Naive thymus-derived CD4-positive, alpha-beta T cell (primary cell): ENCODE measurements at regions of chr2 and their contacts with region 1.

Region 1: DNA sequence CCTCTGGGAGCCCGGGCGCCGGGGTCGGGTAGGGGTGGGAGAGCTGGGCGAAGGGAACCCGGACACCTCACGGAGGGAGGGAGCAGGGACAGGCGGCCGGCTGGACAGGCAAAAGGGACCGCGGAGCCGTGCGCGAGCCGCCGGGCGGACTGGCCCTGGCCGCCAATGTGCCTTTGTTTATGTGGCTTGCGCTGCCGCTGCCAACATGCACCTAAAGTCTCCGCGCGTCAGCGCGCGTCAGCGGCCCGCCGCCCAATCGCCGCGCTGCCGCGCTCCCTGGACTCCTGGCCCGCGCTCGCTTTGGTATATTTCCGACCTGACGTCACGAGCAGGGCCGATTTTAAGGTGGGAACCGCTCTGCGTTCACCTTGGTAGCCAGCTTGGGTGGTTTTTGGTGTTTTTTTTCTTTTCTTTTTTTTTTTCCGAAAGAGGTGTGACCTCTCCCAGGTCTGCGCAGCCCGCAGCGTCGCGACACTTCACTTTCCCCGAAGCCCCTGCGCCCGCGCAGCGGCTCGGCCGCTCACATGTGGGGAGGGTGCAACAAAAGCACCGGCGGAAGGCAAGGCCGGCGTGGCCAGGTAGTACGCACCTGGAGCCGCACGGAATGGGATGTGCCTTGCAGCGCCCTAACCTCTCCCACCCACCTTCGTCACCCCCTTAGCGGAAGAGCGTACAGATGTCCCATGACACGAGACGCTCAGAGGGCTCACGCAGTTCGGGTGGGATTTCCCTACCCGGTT is at the start of gene NR4A2:
- DNase-seq: peak; percentile 83 to 95 (median 90)
- ATAC-seq: peak; percentile 72
- H3K4me3 ChIP-seq: peak within 1 kb of the TSS; percentile 90
- H3K4me3 Mint-ChIP-seq: peak within 1 kb of the TSS; percentile 90 to 99 (median 96)
- H3K27ac ChIP-seq: peak within 1 kb of the TSS; percentile 100
- H3K27ac Mint-ChIP-seq: peak within 1 kb of the TSS; percentile 92 to 100 (median 99)
- H3K4me1 ChIP-seq: peaks cover 0 to 4% of the 10 kb centered on the region in 2 donors
- H3K4me1 Mint-ChIP-seq: peaks cover 27 to 47% (median 40%) of the 10 kb centered on the region in 7 donors
- H3K27me3 ChIP-seq: no peaks in the 10 kb centered on the region
- H3K27me3 Mint-ChIP-seq: peaks cover 9 to 27% (median 16%) of the 10 kb centered on the region in 5 donors
- total RNA-seq, gene NR4A2: 2.2 to 252 (median 3.2) TPM

Region 2: DNA sequence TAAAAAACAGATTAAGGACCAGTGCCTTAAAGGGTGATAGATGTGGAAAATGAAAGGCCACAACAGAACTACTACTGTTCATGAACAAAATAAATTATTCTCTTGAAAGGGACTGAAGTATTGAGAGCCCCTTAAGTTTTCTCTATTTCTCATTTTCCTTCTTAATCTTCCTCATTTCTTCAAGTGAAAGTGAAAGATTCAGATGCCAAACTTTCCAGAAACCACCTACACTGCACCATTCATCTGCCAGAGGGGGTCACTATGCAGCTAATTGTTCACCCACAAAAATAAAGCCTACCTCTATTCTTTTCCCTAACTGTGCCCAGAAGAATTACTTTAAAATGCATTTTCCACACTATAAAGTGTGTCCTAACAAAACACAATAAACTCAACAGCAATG is 140.2 kb before region 1 on chr2:
- CTCF ChIA-PET with region 1: interaction called, 3 read pairs
- POLR2A ChIA-PET with region 1: no interaction called
- intact Hi-C with region 1: loop called in 1 of 2 experiments (anchors 5 kb)
- DNase-seq: peak in 1 of 9 donors; percentile 3
- ATAC-seq: no peak
- H3K4me3 ChIP-seq: no peak overlapping the region
- H3K4me3 Mint-ChIP-seq: no peak overlapping the region
- H3K27ac ChIP-seq: no peak overlapping the region
- H3K27ac Mint-ChIP-seq: no peak overlapping the region
- H3K4me1 ChIP-seq: no peaks in the 10 kb centered on the region
- H3K4me1 Mint-ChIP-seq: no peaks in the 10 kb centered on the region
- H3K27me3 ChIP-seq: no peaks in the 10 kb centered on the region
- H3K27me3 Mint-ChIP-seq: no peaks in the 10 kb centered on the region

Region 3: DNA sequence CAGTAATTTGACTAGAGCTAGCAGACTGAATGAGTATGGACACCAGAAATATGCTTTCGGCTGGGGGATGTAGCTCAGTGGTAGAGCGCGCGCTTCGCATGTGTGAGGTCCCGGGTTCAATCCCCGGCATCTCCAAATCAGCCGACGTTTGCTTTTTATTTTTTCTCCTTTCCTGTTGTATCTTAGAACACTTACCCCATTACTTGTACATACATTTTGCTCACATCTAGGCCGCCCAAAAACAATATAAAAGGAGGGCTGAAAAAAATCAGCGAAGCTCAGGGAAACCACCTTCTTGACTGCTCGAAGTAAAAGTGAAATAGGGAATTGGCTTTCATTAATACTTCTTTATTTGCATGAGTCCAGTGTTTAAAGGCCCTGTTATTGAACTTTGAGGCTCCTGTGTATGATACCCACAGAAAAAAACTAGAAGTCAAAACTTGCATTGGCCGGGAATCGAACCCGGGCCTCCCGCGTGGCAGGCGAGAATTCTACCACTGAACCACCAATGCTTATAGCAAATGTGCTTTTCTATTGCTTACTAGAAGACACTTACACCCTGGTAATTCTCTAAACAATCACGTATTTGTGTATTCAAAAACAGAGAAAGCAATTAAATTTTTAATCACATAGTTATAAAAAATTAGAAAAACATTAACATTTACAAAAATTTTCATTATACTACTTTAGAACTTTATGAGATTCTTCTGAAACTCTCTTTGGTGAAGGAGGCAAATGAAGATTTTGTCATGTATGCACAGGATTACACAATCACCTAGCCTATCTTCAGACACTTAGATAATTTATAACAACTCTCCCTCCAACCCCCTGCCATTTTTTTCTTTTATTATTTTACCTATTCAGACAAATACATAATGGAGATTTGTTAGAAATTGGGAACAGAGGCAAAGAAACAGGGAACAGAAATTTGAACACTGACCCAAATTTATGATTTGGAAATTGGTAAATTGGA is 68.3 kb after region 1 on chr2:
- CTCF ChIA-PET with region 1: interaction called, 18 read pairs
- POLR2A ChIA-PET with region 1: interaction called, 28 read pairs
- intact Hi-C with region 1: loop called (anchors 1 kb)
- DNase-seq: peak; percentile 66 to 91 (median 89)
- ATAC-seq: peak; percentile 86
- H3K4me3 ChIP-seq: peak overlapping the region; percentile 100
- H3K4me3 Mint-ChIP-seq: peak overlapping the region; percentile 86 to 96 (median 90)
- H3K27ac ChIP-seq: peak overlapping the region; percentile 95
- H3K27ac Mint-ChIP-seq: peak overlapping the region; percentile 92 to 99 (median 95)
- H3K4me1 ChIP-seq: peaks cover 5 to 6% of the 10 kb centered on the region in 2 donors
- H3K4me1 Mint-ChIP-seq: peaks cover 16 to 39% (median 23%) of the 10 kb centered on the region in 7 donors
- H3K27me3 ChIP-seq: no peaks in the 10 kb centered on the region
- H3K27me3 Mint-ChIP-seq: peaks cover 0 to 6% (median 0%) of the 10 kb centered on the region in 5 donors

Region 4: DNA sequence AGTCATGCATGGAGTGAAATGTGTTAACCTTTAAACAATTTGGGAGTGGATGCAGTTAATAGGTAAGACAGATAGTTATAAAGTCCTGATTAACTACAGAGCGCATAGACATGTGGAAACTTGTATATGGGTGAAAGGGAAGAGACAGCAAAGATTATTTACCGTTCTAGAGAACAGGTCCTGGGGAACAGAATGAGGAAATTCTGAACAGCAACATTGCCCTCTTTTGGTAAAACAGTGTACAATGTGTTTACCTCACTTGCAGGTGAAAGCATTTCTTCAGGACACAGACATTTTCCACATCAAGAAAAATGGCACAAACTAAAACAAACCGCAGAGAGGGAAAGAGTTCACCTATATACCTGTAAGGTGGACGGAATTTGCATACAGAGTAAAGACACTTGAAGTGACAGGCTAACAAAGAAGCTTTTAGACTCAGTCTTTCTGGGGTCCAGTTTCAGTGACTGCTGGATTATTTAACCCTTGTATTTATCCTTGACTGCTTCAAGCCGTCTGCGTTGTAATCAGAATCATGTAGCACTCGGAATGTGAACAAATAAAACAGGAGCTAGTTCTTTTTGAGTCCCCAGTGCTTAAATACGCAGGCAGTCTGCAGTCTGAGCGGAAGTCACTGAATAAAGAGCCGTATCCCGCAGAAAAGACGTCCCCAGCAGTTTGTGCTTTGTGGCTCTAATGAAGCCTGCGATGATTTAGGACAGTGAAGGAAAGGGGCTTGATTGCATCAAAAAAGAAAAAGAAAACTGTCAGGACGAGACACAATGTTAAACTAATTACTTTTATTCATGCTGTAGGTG is 560.0 kb after region 1 on chr2:
- CTCF ChIA-PET with region 1: no interaction called
- POLR2A ChIA-PET with region 1: no interaction called
- intact Hi-C with region 1: loop called in 1 of 2 experiments (anchors 5 kb)
- DNase-seq: peak in 2 of 9 donors; percentile 1 to 8
- ATAC-seq: peak; percentile 40
- H3K4me3 ChIP-seq: no peak overlapping the region
- H3K4me3 Mint-ChIP-seq: peak overlapping the region in 6 of 10 donors; percentile 1 to 36 (median 22)
- H3K27ac ChIP-seq: no peak overlapping the region
- H3K27ac Mint-ChIP-seq: no peak overlapping the region
- H3K4me1 ChIP-seq: no peaks in the 10 kb centered on the region
- H3K4me1 Mint-ChIP-seq: peaks cover 5 to 32% (median 10%) of the 10 kb centered on the region in 7 donors
- H3K27me3 ChIP-seq: peaks cover 0 to 6% of the 10 kb centered on the region in 2 donors
- H3K27me3 Mint-ChIP-seq: peaks cover 36 to 67% (median 45%) of the 10 kb centered on the region in 5 donors

Region 5: DNA sequence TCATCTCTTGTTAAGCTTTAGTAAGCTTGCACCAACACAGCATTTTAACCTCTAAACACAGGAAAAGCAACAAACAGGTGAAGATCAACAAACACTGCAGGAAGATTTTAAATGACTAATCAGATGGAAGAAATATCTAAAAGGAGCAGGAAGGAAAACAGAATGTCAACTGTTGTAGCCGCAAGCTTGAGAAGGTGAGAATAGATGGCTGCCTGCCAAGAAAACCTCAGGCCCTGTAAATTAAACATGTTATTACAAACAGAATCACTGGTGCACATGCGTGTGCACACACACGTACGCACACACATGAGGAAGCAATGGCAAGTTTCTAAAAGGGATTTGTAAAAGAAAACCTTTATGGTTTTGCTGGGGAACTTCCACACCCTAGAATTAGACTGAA is 667.0 kb after region 1 on chr2:
- CTCF ChIA-PET with region 1: no interaction called
- POLR2A ChIA-PET with region 1: no interaction called
- intact Hi-C with region 1: no loop called
- DNase-seq: no peak
- ATAC-seq: no peak
- H3K4me3 ChIP-seq: no peak overlapping the region
- H3K4me3 Mint-ChIP-seq: no peak overlapping the region
- H3K27ac ChIP-seq: no peak overlapping the region
- H3K27ac Mint-ChIP-seq: no peak overlapping the region
- H3K4me1 ChIP-seq: no peaks in the 10 kb centered on the region
- H3K4me1 Mint-ChIP-seq: peaks cover 0 to 1% (median 0%) of the 10 kb centered on the region in 7 donors
- H3K27me3 ChIP-seq: no peaks in the 10 kb centered on the region
- H3K27me3 Mint-ChIP-seq: no peaks in the 10 kb centered on the region

Region 6: DNA sequence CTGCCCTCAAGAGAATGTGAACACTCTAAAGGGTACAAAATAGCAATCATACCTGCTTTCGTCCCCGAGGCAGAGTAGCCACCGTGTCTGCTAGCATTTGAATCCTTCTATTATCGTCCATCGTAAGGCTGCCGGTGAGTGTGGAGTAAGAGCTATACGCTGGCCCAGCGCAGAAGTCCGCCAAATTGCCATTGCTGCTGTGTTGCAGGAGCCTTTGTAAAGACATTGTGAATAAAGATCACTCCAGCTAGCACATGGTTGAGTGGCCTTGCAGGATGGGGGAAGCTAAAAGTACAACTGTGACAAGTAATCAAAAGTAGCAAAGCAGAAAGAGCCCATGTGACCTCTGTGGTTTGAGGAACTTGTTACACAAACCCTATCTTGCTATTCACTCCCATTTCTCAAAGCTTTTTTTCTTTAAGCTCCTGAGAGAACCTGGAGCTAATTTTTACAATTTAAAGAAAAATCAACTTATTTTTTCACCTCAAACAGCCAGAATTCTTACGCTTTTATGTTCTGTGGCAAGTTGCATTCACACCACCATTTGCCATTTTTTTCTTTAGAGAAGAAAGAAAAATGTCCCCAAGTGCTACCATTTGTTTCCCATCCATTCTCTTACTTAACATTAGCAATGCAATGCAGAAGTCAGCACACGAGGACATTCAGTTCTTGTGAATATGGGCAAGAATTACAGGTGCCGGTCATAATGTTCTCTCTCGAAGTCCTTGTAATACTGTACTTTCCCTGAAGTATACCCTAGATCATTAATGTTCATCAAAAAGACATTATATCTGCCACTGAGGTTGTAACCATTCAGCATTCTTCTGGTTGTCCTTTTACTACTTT is 1111.3 kb after region 1 on chr2 and contains the start of gene CYTIP:
- CTCF ChIA-PET with region 1: no interaction called
- POLR2A ChIA-PET with region 1: no interaction called
- intact Hi-C with region 1: loop called (anchors 5 to 10 kb)
- DNase-seq: peak; percentile 32 to 85 (median 78)
- ATAC-seq: peak; percentile 71
- H3K4me3 ChIP-seq: peak within 1 kb of the TSS; percentile 97
- H3K4me3 Mint-ChIP-seq: peak within 1 kb of the TSS; percentile 92 to 100 (median 97)
- H3K27ac ChIP-seq: peak within 1 kb of the TSS; percentile 89
- H3K27ac Mint-ChIP-seq: peak within 1 kb of the TSS; percentile 95 to 100 (median 98)
- H3K4me1 ChIP-seq: peaks cover 30 to 34% of the 10 kb centered on the region in 2 donors
- H3K4me1 Mint-ChIP-seq: peaks cover 32 to 48% (median 46%) of the 10 kb centered on the region in 7 donors
- H3K27me3 ChIP-seq: no peaks in the 10 kb centered on the region
- H3K27me3 Mint-ChIP-seq: no peaks in the 10 kb centered on the region
- total RNA-seq, gene CYTIP: 290 to 406 (median 363) TPM